PC-9 (cell line): ENCODE measurements at regions of chr17 and their contacts with region 1.

Region 1: DNA sequence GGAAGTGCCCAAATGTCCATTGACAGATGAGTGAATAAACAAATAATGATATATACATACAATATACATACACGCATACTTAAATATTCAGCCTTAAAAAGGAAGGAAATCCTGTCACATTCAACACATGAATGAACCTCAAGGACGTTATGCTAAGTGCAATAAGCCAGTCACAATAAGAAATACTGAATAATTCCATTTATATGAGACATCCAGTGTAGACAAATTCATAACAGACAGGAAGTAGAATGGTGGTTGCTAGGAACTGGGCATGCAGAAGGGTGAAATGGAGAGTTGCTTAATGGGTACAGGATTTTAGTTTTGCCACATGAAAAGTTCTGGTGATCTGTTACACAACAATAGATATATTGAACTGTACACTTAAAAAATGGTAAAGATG is 8.8 kb upstream of the ITGB4 start:
- DNase-seq: no peak
- H3K4me3 ChIP-seq: no peak overlapping the region
- H3K27ac ChIP-seq: no peak overlapping the region
- H3K4me1 ChIP-seq: peaks cover 19% of the 10 kb centered on the region
- H3K27me3 ChIP-seq: no peaks in the 10 kb centered on the region
- CTCF ChIP-seq: no peak

Region 2: GRCh38 chr17:75679706-75680442 is 32.6 kb before region 1 on chr17:
- CTCF ChIA-PET with region 1: interaction called, 5 read pairs
- POLR2A ChIA-PET with region 1: interaction called, 27 read pairs
- intact Hi-C with region 1: no loop called
- DNase-seq: peak; percentile 70 to 77
- H3K4me3 ChIP-seq: no peak overlapping the region
- H3K27ac ChIP-seq: peak overlapping the region; percentile 51
- H3K4me1 ChIP-seq: peaks cover 59% of the 10 kb centered on the region
- H3K27me3 ChIP-seq: no peaks in the 10 kb centered on the region
- CTCF ChIP-seq: peak; percentile 58

Region 3: DNA sequence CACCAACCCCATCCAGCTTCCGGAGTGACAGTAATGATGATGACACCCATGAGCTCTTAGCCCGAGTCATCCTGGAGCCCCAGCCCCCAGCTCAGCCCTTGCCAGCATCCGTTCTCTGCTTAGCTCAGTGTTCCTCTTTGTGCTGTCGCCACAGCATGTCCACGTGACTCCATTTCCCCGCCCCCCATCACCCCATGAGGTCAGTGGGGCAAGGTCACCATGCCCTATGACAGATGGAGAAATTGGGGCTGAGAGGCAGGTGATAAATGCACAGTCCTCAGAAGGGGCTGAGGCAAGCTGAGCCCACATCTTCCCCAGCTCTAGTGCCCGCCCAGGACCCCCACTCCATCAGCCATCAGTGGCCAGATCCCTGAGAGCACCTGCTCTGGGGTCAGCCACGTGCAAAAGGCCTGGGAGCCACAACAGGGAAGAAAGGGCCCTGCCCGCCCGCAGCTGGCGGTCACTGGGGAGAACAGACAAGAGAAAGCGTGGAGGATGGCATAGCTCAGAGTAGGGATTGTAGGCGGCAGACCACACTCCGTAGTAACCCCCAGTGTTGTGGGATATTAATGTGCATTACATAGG is 25.9 kb after region 1 on chr17:
- CTCF ChIA-PET with region 1: interaction called, 7 read pairs
- POLR2A ChIA-PET with region 1: interaction called, 19 read pairs
- intact Hi-C with region 1: no loop called
- DNase-seq: no peak
- H3K4me3 ChIP-seq: no peak overlapping the region
- H3K27ac ChIP-seq: no peak overlapping the region
- H3K4me1 ChIP-seq: no peaks in the 10 kb centered on the region
- H3K27me3 ChIP-seq: no peaks in the 10 kb centered on the region
- CTCF ChIP-seq: no peak